PC-9 (cell line): ENCODE measurements at regions of chr7 and their contacts with region 1.

Region 1: GRCh38 chr7:77657427-77658224 is 38.6 kb upstream of the RSBN1L start:
- DNase-seq: peak in 1 of 2 experiments; percentile 50
- H3K4me3 ChIP-seq: no peak overlapping the region
- H3K27ac ChIP-seq: no peak overlapping the region
- H3K4me1 ChIP-seq: no peaks in the 10 kb centered on the region
- H3K27me3 ChIP-seq: no peaks in the 10 kb centered on the region
- CTCF ChIP-seq: peak; percentile 73

Region 2: GRCh38 chr7:77570330-77571011 is 87.2 kb before region 1 on chr7:
- CTCF ChIA-PET with region 1: no interaction called
- POLR2A ChIA-PET with region 1: no interaction called
- intact Hi-C with region 1: no loop called
- DNase-seq: no peak
- H3K4me3 ChIP-seq: no peak overlapping the region
- H3K27ac ChIP-seq: peak overlapping the region; percentile 7; the same call in 1 of the 2 replicates
- H3K4me1 ChIP-seq: peaks cover 11% of the 10 kb centered on the region
- H3K27me3 ChIP-seq: no peaks in the 10 kb centered on the region
- CTCF ChIP-seq: no peak

Region 3: GRCh38 chr7:77696198-77697028 is 38.8 kb after region 1 on chr7 and contains the start of gene RSBN1L:
- CTCF ChIA-PET with region 1: no interaction called
- POLR2A ChIA-PET with region 1: interaction called, 4 read pairs
- intact Hi-C with region 1: loop called (anchors 1 kb)
- DNase-seq: peak; percentile 90 to 99
- H3K4me3 ChIP-seq: peak within 1 kb of the TSS; percentile 89
- H3K27ac ChIP-seq: peak within 1 kb of the TSS; percentile 51
- H3K4me1 ChIP-seq: peaks cover 32% of the 10 kb centered on the region
- H3K27me3 ChIP-seq: no peaks in the 10 kb centered on the region
- CTCF ChIP-seq: no peak
- total RNA-seq, gene RSBN1L: 13.3 and 20.7 TPM in 2 replicates

Region 4: DNA sequence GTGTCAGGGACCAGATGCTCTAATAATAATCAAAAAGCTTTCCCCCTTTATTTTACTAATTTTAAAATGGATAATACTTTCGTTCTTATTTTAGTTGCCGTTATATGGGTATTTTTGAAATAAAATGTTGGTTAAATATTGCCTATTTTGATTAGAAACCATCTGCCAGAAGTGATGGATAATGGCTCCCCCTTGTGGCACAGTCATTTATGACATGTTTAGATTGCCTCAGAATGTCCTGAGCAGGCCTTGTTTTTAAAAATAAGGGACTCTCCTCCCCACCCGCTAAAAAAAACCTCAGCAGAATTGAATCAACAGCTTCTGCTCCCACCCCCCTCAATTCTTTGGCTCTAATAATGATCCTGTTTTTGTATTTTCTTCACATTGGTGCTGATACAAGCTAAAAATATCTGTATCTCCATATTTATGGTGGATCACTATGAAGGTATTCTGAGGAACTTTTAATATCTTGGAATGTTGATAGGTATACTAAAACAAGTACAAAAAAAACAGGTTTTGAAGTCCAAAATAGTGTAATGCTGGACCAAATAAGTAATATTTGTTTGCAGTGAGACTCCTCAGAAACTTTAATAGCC is 101.8 kb after region 1 on chr7:
- CTCF ChIA-PET with region 1: interaction called, 8 read pairs
- POLR2A ChIA-PET with region 1: no interaction called
- intact Hi-C with region 1: loop called (anchors 1 kb)
- DNase-seq: peak; percentile 40 to 55
- H3K4me3 ChIP-seq: no peak overlapping the region
- H3K27ac ChIP-seq: no peak overlapping the region; the same call in 1 of the 2 replicates
- H3K4me1 ChIP-seq: 0 out of 2 replicates have a peak, but pooled peaks cover 3% of the 10 kb centered on the region
- H3K27me3 ChIP-seq: no peaks in the 10 kb centered on the region
- CTCF ChIP-seq: peak; percentile 92

Region 5: GRCh38 chr7:77933394-77933793 is 275.8 kb after region 1 on chr7:
- CTCF ChIA-PET with region 1: interaction called, 4 read pairs
- POLR2A ChIA-PET with region 1: no interaction called
- intact Hi-C with region 1: loop called (anchors 5 kb)
- DNase-seq: no peak
- H3K4me3 ChIP-seq: no peak overlapping the region
- H3K27ac ChIP-seq: no peak overlapping the region
- H3K4me1 ChIP-seq: no peaks in the 10 kb centered on the region
- H3K27me3 ChIP-seq: no peaks in the 10 kb centered on the region
- CTCF ChIP-seq: no peak

Region 6: GRCh38 chr7:78226059-78226719 is 568.6 kb after region 1 on chr7:
- CTCF ChIA-PET with region 1: no interaction called
- POLR2A ChIA-PET with region 1: no interaction called
- intact Hi-C with region 1: loop called (anchors 10 kb)
- DNase-seq: peak in 1 of 2 experiments; percentile 35
- H3K4me3 ChIP-seq: no peak overlapping the region
- H3K27ac ChIP-seq: no peak overlapping the region
- H3K4me1 ChIP-seq: no peaks in the 10 kb centered on the region
- H3K27me3 ChIP-seq: no peaks in the 10 kb centered on the region
- CTCF ChIP-seq: peak; percentile 57